ENCODE measurements at regions of chr1 and their contacts with region 1.

Region 1: GRCh38 chr1:167066333-167067122 is 23.6 kb downstream of the GPA33 start:
- DNase-seq: peak; percentile 66 to 79 (median 72)
- H3K4me3 ChIP-seq: no peak overlapping the region
- H3K4me3 Mint-ChIP-seq: peak overlapping the region in 2 of 8 donors; percentile 51 to 58
- H3K27ac ChIP-seq: no peak overlapping the region
- H3K27ac Mint-ChIP-seq: peak overlapping the region in 1 of 7 donors; percentile 85
- H3K4me1 ChIP-seq: no peaks in the 10 kb centered on the region
- H3K4me1 Mint-ChIP-seq: peaks cover 0 to 2% (median under 1%) of the 10 kb centered on the region in 4 donors
- H3K27me3 ChIP-seq: no peaks in the 10 kb centered on the region
- H3K27me3 Mint-ChIP-seq: no peaks in the 10 kb centered on the region

Region 2: GRCh38 chr1:166910396-166910994 is 156.0 kb before region 1 on chr1:
- CTCF ChIA-PET with region 1: interaction called, 842 read pairs
- POLR2A ChIA-PET with region 1: interaction called, 8 read pairs
- intact Hi-C with region 1: no loop called
- DNase-seq: peak; percentile 73 to 86 (median 80)
- H3K4me3 ChIP-seq: no peak overlapping the region
- H3K4me3 Mint-ChIP-seq: no peak overlapping the region
- H3K27ac ChIP-seq: no peak overlapping the region
- H3K27ac Mint-ChIP-seq: no peak overlapping the region
- H3K4me1 ChIP-seq: peaks cover 3% of the 10 kb centered on the region
- H3K4me1 Mint-ChIP-seq: peaks cover 0 to 7% (median 4%) of the 10 kb centered on the region in 4 donors
- H3K27me3 ChIP-seq: no peaks in the 10 kb centered on the region
- H3K27me3 Mint-ChIP-seq: peaks cover 0 to 5% of the 10 kb centered on the region in 2 donors

Region 3: DNA sequence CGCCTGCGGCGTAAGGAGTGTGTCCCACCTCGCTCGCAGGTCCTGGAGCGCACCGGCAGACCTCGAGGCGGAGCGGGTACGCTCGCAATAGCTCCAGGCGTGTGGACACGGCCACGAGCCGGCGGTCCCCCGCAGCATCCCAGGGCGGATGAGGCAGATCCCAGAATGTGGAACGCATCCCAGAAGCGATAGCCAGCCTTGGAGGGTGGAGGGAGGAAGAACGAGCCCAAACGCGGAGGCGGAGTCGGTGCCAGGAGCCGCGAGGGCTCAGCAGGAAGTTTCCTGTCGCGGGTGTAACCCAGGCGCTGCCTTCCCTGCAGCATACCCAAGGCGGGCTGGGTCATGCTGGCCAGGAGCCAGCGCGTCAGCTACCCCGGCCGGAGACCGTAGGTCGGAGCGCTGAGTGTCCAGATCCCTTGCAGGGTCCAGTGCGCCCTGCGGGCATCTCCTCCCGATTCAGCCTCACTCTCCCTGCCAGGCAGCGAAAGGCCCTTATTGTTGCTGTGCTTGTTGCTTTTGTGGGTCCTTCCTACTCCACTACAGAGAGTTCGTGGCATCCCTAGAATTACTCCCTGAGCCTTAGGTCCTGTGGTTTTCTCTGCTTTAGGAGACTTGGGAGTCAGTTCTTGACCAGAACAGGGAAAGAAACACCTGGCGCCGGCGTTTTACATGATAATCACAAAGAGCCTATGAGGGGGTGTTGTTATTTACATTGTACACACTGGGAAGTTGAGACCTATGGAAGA is 55.0 kb after region 1 on chr1:
- CTCF ChIA-PET with region 1: interaction called, 183 read pairs
- POLR2A ChIA-PET with region 1: interaction called, 3 read pairs
- intact Hi-C with region 1: loop called (anchors 1 kb)
- DNase-seq: peak in 4 of 5 donors; percentile 18 to 40 (median 27)
- H3K4me3 ChIP-seq: peak overlapping the region; percentile 47 to 49
- H3K4me3 Mint-ChIP-seq: peak overlapping the region; percentile 78 to 93 (median 86)
- H3K27ac ChIP-seq: no peak overlapping the region
- H3K27ac Mint-ChIP-seq: peak overlapping the region in 3 of 7 donors; percentile 22 to 60 (median 36)
- H3K4me1 ChIP-seq: peaks cover 7% of the 10 kb centered on the region
- H3K4me1 Mint-ChIP-seq: peaks cover 0 to 12% (median 3%) of the 10 kb centered on the region in 4 donors
- H3K27me3 ChIP-seq: no peaks in the 10 kb centered on the region
- H3K27me3 Mint-ChIP-seq: peaks cover 1 to 7% of the 10 kb centered on the region in 2 donors

Region 4: GRCh38 chr1:167263819-167264464 is 197.4 kb after region 1 on chr1:
- CTCF ChIA-PET with region 1: interaction called, 5 read pairs
- POLR2A ChIA-PET with region 1: no interaction called
- intact Hi-C with region 1: loop called (anchors 1 kb)
- DNase-seq: peak in 2 of 5 donors; percentile 4 to 8
- H3K4me3 ChIP-seq: no peak overlapping the region
- H3K4me3 Mint-ChIP-seq: no peak overlapping the region
- H3K27ac ChIP-seq: no peak overlapping the region
- H3K27ac Mint-ChIP-seq: no peak overlapping the region
- H3K4me1 ChIP-seq: peaks cover 45% of the 10 kb centered on the region
- H3K4me1 Mint-ChIP-seq: peaks cover 17 to 27% (median 19%) of the 10 kb centered on the region in 4 donors
- H3K27me3 ChIP-seq: no peaks in the 10 kb centered on the region
- H3K27me3 Mint-ChIP-seq: no peaks in the 10 kb centered on the region

Region 5: DNA sequence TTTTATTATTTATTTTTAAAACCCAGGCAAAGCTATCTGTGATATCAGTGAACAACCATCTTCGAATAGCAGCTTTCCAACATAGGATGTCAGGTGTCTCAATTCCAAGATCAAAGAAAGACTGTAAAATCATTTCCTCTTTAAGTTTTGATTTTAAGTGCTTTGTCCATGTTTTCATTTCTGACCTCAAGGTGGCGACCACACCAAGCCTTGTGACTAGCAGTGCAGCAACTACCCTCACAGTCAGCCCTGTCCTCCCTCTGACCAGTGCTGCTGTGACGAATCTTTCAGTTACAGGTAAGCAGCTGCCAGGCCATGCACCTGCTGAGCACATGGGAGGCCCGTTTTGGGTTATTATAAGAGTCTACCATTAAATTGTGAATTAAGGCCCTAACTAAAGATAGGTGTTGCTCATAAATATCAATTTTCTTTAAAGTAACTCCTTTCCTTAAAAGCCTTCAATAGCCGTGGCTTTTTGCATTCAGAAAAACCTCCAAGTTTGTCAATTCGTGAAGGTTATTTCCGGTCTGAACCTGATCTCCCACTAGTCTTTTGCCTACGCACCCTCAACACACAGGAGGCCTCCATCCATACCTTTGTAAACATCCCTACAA is 334.8 kb after region 1 on chr1:
- CTCF ChIA-PET with region 1: interaction called, 3 read pairs
- POLR2A ChIA-PET with region 1: no interaction called
- intact Hi-C with region 1: loop called (anchors 10 kb)
- DNase-seq: peak in 4 of 5 donors; percentile 37 to 47 (median 41)
- H3K4me3 ChIP-seq: no peak overlapping the region
- H3K4me3 Mint-ChIP-seq: no peak overlapping the region
- H3K27ac ChIP-seq: no peak overlapping the region
- H3K27ac Mint-ChIP-seq: no peak overlapping the region
- H3K4me1 ChIP-seq: no peaks in the 10 kb centered on the region
- H3K4me1 Mint-ChIP-seq: peaks cover 0 to 3% (median under 1%) of the 10 kb centered on the region in 4 donors
- H3K27me3 ChIP-seq: no peaks in the 10 kb centered on the region
- H3K27me3 Mint-ChIP-seq: no peaks in the 10 kb centered on the region

Region 6: GRCh38 chr1:167420510-167420909 is 354.0 kb after region 1 on chr1:
- CTCF ChIA-PET with region 1: no interaction called
- POLR2A ChIA-PET with region 1: no interaction called
- intact Hi-C with region 1: no loop called
- DNase-seq: no peak
- H3K4me3 ChIP-seq: no peak overlapping the region
- H3K4me3 Mint-ChIP-seq: no peak overlapping the region
- H3K27ac ChIP-seq: no peak overlapping the region
- H3K27ac Mint-ChIP-seq: no peak overlapping the region
- H3K4me1 ChIP-seq: no peaks in the 10 kb centered on the region
- H3K4me1 Mint-ChIP-seq: peaks cover 0 to 11% (median 2%) of the 10 kb centered on the region in 4 donors
- H3K27me3 ChIP-seq: no peaks in the 10 kb centered on the region
- H3K27me3 Mint-ChIP-seq: no peaks in the 10 kb centered on the region

Region 7: GRCh38 chr1:167553136-167554027 is 486.9 kb after region 1 on chr1 and contains the start of gene CREG1:
- CTCF ChIA-PET with region 1: interaction called, 4 read pairs
- POLR2A ChIA-PET with region 1: no interaction called
- intact Hi-C with region 1: loop called (anchors 1 kb)
- DNase-seq: peak; percentile 85 to 93 (median 87)
- H3K4me3 ChIP-seq: peak within 1 kb of the TSS; percentile 74 to 77
- H3K4me3 Mint-ChIP-seq: peak within 1 kb of the TSS; percentile 87 to 94 (median 90)
- H3K27ac ChIP-seq: peak within 1 kb of the TSS; percentile 41
- H3K27ac Mint-ChIP-seq: peak within 1 kb of the TSS; percentile 36 to 89 (median 84)
- H3K4me1 ChIP-seq: peaks cover 30% of the 10 kb centered on the region
- H3K4me1 Mint-ChIP-seq: peaks cover 23 to 56% (median 39%) of the 10 kb centered on the region in 4 donors
- H3K27me3 ChIP-seq: no peaks in the 10 kb centered on the region
- H3K27me3 Mint-ChIP-seq: peaks cover 0 to 3% of the 10 kb centered on the region in 2 donors
- total RNA-seq, gene CREG1: 21.0 to 21.7 TPM